Cardiac septum (tissue), 1 donor: ENCODE measurements at regions of chr11 and their contacts with region 1.

Region 1: GRCh38 chr11:10899121-10899830 is 41.4 kb upstream of the ZBED5 start:
- DNase-seq: no peak

Region 2: DNA sequence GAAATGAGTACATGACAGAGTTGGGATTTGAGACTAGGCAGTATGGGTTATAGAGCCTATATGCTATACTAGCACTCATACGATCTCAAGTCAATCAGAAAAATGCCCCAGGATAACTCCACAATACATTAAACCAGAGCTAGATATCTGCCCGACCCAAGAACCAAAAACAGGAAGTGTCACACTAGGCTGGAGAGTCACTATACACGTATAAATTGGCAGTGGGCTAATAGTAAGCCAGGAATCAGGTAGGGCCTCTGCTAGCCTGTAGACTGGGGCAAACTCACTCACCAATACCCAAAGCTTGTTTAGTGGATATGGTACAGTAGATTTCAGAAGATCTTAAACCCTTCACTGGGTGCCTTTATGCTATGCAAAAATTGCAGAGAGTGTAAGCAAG is 74.4 kb before region 1 on chr11:
- intact Hi-C with region 1: no loop called
- DNase-seq: no peak

Region 3: DNA sequence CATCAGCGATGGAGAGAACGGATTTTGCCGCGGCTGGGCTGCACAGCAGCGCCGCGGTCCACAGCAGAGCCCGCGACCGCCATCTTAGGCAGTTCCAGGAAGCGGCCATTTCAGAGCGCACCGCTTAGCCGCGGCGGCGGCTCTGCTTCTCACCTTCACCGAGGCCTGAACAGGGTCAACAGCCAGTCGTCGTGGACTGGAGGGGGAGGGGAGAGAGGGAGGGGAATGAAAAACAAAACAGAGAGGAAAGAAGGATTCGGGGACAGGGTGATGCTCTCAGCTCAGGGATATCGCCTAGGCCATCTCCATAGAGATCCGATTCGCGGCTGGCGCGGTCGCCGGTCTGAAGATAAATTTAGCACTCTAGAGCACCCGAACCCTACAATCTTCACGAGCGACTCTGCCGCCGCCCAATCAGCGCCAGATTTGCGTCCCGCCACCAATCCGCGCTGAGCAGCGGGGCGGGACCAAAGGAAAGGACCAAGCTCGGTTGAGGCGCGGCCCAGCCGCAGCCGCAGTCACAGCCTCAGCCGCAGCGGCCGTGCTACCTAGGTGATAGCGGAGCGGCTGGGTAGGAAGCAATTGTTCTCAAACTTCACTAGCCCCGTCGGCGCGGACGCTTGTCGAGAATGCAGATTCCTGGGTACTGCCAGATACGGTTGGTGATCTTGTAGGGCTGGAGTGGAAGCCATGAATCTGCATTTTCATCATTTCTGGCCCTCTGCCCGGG is 41.4 kb before region 1 on chr11 and contains the start of gene ZBED5:
- intact Hi-C with region 1: loop called (anchors 5 kb)
- DNase-seq: peak; percentile 99
- total RNA-seq, gene ZBED5: 38.8 TPM